Vagina (tissue), 2 donors: ENCODE measurements at regions of chr1 and their contacts with region 1.

Region 1: DNA sequence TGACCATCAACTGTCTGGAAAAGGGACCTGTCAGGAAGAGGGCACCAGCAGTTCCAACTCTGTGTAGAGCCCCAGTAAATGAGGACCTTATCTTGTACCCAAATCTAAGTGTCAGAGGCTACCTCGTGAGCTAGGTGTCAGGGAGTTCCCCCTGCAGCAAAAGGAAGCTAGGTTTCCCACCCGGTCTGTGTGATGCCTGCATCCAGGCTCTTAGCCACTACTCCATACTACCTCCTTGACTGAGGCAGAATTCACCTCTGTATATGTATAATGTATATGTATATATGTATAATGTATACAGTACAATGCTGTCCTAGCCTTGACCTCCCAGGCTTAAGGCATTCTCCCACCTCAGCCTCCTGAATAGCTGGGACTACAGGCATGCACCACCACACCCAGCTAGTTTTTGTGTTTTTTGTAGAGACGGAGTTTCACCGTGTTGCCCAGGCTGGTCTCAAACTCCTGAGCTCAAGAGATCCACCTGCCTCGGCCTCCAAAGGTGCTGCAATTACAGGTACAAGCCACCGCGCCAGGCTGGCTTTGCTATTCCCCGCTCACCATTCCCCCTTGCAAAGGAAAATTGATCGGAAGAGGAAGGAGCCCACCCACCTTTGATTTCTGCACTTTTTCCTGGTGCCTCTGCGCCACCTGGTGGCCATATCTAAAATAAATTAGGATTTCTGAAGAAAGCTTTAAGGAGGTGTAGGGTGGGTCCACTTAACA is 15.7 kb upstream of the LUZP1 start:
- DNase-seq: no peak
- H3K4me3 ChIP-seq: peak overlapping the region; percentile 31 to 47
- H3K27ac ChIP-seq: no peak overlapping the region
- H3K4me1 ChIP-seq: peaks cover 7% of the 10 kb centered on the region
- H3K27me3 ChIP-seq: no peaks in the 10 kb centered on the region
- CTCF ChIP-seq: peak; percentile 86 to 96 (median 95)
- POLR2A ChIP-seq: no peak

Region 2: GRCh38 chr1:22976461-22977243 is 207.7 kb before region 1 on chr1:
- intact Hi-C with region 1: loop called (anchors 10 kb)
- DNase-seq: no peak
- H3K4me3 ChIP-seq: no peak overlapping the region
- H3K27ac ChIP-seq: no peak overlapping the region
- H3K4me1 ChIP-seq: no peaks in the 10 kb centered on the region
- H3K27me3 ChIP-seq: no peaks in the 10 kb centered on the region
- CTCF ChIP-seq: peak in 2 of 3 experiments; percentile 43 to 58
- POLR2A ChIP-seq: no peak

Region 3: GRCh38 chr1:23098463-23099170 is 85.8 kb before region 1 on chr1:
- intact Hi-C with region 1: loop called (anchors 5 kb)
- DNase-seq: no peak
- H3K4me3 ChIP-seq: no peak overlapping the region
- H3K27ac ChIP-seq: peak overlapping the region; percentile 49
- H3K4me1 ChIP-seq: peaks cover 62% of the 10 kb centered on the region
- H3K27me3 ChIP-seq: no peaks in the 10 kb centered on the region
- CTCF ChIP-seq: peak; percentile 81 to 97 (median 97)
- POLR2A ChIP-seq: no peak

Region 4: DNA sequence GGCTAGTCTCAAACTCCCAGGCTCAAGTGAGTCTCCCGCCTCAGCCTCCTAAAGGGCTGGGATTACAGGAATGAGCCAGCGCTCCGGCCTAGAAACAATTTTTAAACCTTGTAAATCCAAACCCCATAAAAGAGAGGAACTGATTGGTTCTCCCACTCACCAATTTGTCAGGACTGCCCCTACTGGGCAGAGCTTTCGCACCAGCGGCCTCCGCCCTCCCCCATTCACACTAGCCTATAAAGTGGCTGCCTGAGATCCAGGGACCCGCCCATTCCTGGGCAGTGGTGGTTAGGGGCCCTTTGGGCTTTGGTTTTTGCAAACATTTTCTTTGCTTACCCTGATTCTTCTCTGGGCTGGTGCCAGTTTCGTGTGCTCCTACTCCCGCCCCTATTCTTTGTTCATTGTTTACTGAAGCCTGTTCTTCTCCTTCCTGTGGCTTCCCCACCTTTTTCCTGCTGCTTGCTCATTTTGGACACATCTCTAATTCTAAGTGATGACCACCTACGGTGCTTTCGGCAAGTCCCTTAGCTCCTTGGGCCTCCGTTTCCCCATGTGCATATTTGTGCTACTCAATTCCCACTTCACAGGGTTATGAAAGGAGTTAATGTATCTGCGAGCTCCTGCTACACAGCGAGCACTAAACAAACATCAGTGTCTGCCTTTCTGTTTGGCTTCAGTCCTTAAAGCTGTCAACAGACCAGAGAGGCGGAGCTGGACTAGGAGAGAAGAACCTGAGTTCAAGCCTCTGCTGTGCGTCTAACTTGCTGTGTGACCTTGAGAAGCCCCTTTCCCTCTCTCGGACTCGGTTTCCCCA is 1521.1 kb after region 1 on chr1:
- intact Hi-C with region 1: no loop called
- DNase-seq: no peak
- H3K4me3 ChIP-seq: peak overlapping the region in 1 of 2 donors; percentile 2
- H3K27ac ChIP-seq: peak overlapping the region; percentile 34
- H3K4me1 ChIP-seq: no peaks in the 10 kb centered on the region
- H3K27me3 ChIP-seq: no peaks in the 10 kb centered on the region
- CTCF ChIP-seq: no peak
- POLR2A ChIP-seq: no peak